HEK293T (cell line): ENCODE measurements at regions of chr17 and their contacts with region 1.

Region 1: GRCh38 chr17:48503748-48504147 is 27.1 kb downstream of the HOXB1 start:
- DNase-seq: no peak

Region 2: DNA sequence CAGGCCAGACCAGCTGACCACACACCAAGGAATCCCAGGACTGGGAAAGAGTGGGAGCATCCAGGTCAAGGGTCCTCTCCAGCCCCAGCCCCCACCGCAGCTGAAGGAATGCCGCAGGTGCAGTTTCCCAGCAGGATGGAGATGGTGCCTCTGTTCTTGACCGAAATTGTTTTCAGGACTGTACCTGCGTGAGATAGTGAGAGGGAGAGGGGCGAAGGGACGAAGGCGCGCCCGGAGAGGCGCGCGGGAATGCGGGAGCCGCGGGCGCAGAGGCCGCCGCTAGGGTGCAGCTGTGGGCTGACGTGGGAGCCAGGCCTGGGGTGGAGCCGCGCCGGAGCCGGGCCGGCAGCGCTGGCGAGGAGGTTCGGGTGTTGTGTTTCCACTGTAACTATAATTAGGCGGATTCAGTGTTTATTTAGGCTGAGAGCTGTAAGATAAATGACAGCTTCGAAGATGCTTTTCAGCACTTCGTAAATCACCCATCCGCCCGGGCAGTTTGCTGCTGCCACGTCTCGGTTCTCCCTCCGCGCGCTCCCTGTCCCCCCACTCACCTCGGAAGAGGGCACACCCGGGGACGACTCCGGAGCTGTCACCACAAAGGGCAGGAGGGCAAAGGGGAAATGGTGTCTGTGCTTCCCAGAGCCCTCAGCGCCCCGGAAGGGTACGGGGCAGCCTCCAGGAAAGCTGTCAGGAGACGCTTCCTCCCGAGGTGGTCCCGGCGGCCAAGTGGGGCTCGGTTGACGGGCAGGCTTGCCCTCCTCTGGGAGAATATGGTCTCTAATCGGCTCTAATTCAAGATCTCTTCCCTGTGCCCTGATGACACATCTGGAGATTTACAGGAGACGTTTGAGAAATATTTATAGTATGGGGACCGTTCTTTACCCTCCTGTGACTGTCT is 11.1 kb before region 1 on chr17:
- CTCF ChIA-PET with region 1: interaction called, 7 read pairs
- POLR2A ChIA-PET with region 1: interaction called, 13 read pairs
- DNase-seq: peak; percentile 90

Region 3: DNA sequence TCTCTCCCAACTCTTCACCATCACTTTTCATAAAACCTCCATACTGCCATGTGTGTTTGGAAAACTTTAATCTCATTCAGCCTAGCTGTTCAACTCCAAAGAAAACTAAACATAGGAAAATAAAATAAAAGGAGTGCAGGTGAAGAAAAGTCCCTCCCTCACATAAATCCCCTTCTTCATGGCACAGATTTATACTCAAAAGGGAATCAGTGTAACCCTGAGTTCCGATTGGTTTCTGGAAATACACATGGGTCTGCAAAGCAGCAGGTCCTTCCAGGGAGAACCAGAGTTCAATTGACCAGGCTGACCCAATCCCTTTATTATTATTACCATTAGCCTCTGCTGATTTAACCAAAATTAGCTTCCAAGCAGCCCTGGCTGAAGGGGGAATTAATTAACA is 50.1 kb after region 1 on chr17:
- CTCF ChIA-PET with region 1: no interaction called
- POLR2A ChIA-PET with region 1: no interaction called
- DNase-seq: no peak